ENCODE measurements at regions of chr20 and their contacts with region 1.

Region 1: DNA sequence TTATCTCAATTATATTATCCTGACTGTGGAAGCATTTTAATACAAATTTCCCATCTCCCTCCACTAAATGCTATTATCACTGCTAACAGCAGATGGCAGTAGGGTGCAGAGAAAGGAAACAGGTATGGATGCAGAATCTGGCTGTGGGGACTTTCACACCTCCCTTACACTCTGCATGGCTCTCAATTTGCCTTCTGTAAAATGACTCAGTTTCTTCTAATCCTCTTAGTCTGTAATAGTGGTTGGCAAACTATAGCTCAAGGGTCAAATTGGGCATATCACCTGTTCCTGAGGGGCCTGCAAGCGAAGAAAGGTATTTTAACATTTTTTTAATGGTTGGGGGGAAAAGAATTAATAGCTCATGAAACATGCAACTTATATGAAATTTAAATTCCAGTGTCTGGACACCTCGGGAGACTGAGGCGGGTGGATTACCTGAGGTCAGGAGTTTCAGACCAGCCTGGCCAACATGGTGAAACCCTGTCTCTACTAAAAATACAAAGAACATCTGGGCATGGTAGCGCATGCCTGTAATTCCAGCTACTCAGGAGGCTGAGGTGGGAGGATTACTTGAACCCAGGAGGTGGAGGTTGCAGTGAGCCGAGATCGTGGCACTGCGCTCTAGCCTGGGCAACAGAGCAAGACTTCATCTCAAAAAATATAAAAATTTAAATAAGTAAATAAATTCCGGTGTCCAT is 83.5 kb downstream of the ZMYND8 start:
- DNase-seq: peak in 8 of 9 experiments; percentile 1 to 77 (median 46)
- ATAC-seq: peak; percentile 85
- H3K4me3 ChIP-seq: no peak overlapping the region
- H3K4me3 Mint-ChIP-seq: no peak overlapping the region
- H3K27ac ChIP-seq: no peak overlapping the region
- H3K27ac Mint-ChIP-seq: peak overlapping the region; percentile 66
- H3K4me1 ChIP-seq: no peaks in the 10 kb centered on the region
- H3K4me1 Mint-ChIP-seq: peaks cover 12% of the 10 kb centered on the region
- H3K27me3 ChIP-seq: no peaks in the 10 kb centered on the region
- H3K27me3 Mint-ChIP-seq: no peaks in the 10 kb centered on the region
- CTCF ChIP-seq: peak; percentile 93

Region 2: DNA sequence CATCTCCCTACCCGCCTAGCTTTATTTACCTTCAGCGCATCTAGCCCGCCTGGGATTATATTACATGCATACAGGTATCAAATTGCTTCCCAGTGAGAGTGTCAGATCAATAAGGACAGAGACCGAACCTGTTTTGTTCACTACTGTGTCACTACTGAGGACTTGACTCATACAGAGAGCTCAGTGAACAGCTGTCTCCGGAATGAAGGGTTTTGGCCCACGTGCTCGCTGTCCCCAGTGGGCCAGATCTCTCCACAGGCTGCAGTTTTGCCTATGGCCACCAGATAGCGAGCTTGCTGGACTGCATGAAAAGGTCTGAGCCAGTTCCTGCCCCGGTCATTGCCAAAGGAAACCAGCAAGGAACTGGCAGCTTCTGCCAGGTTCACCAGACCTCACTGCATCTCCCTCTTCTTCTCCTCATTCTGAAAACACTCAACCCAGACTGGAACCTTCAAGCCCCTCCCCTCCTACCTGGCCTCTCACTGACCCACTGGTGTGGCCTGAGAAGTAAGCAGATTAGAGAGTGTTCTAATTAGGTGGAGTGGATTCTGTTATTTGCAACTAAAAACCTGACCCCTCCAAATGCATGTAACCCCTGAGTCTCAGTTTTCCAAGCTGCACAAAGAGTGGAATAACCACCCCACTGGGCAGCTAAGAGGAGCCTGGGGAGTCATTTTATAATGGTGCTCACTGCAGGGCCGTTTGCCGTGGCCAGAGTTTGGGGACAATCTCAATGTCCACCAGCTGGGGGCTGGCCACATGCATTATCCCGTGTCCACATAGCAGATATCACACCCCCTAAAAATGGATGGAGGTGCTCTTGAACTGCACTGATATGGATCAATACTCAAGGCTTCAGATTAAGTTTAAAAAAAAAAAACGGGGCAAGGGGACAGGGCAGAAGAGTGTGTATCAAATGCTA is 67.2 kb before region 1 on chr20:
- CTCF ChIA-PET with region 1: interaction called, 17 read pairs
- POLR2A ChIA-PET with region 1: no interaction called
- intact Hi-C with region 1: no loop called
- DNase-seq: peak in 3 of 9 experiments; percentile 49 to 69 (median 55)
- ATAC-seq: peak; percentile 76
- H3K4me3 ChIP-seq: no peak overlapping the region
- H3K4me3 Mint-ChIP-seq: no peak overlapping the region
- H3K27ac ChIP-seq: no peak overlapping the region
- H3K27ac Mint-ChIP-seq: peak overlapping the region; percentile 34
- H3K4me1 ChIP-seq: no peaks in the 10 kb centered on the region
- H3K4me1 Mint-ChIP-seq: peaks cover 4% of the 10 kb centered on the region
- H3K27me3 ChIP-seq: no peaks in the 10 kb centered on the region
- H3K27me3 Mint-ChIP-seq: no peaks in the 10 kb centered on the region
- CTCF ChIP-seq: peak; percentile 63

Region 3: GRCh38 chr20:47258745-47259695 is 14.0 kb before region 1 on chr20:
- CTCF ChIA-PET with region 1: interaction called, 19 read pairs
- POLR2A ChIA-PET with region 1: no interaction called
- intact Hi-C with region 1: no loop called
- DNase-seq: no peak
- ATAC-seq: no peak
- H3K4me3 ChIP-seq: no peak overlapping the region
- H3K4me3 Mint-ChIP-seq: no peak overlapping the region
- H3K27ac ChIP-seq: no peak overlapping the region
- H3K27ac Mint-ChIP-seq: peak overlapping the region; percentile 80
- H3K4me1 ChIP-seq: no peaks in the 10 kb centered on the region
- H3K4me1 Mint-ChIP-seq: peaks cover 19% of the 10 kb centered on the region
- H3K27me3 ChIP-seq: no peaks in the 10 kb centered on the region
- H3K27me3 Mint-ChIP-seq: no peaks in the 10 kb centered on the region
- CTCF ChIP-seq: no peak

Region 4: DNA sequence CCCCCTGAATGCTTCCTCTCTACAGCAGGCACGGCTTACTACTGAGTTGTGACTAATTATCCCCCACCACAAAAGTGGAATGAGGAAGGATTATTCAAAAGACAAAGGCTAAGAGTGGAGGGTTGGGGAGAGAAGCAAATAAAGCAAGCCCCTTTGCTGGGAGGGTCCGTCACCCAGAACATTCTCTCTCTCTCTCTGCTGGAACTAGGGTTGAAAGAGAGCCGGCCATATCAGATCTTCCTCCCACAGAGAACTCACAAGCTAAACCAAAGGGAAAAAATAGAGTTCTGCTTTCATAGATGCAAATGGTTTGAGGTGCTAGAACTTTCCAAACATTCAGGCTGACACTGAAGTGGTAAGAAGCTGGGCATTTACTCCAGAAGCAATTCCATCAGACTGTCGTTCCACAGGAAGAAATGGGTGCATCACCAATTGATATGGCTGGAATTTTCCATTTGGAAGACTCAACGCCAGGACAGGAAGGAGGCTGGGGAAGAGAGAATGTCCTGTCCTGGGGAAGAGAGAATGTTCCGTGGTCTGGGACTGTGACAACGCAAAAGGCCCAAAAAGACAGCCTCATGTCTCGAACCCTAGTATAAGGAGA is 75.6 kb after region 1 on chr20:
- CTCF ChIA-PET with region 1: interaction called, 36 read pairs
- POLR2A ChIA-PET with region 1: interaction called, 3 read pairs
- intact Hi-C with region 1: loop called in 1 of 2 experiments (anchors 10 kb)
- DNase-seq: no peak
- ATAC-seq: no peak
- H3K4me3 ChIP-seq: no peak overlapping the region
- H3K4me3 Mint-ChIP-seq: no peak overlapping the region
- H3K27ac ChIP-seq: no peak overlapping the region
- H3K27ac Mint-ChIP-seq: no peak overlapping the region
- H3K4me1 ChIP-seq: peaks cover 79% of the 10 kb centered on the region
- H3K4me1 Mint-ChIP-seq: peaks cover 33% of the 10 kb centered on the region
- H3K27me3 ChIP-seq: no peaks in the 10 kb centered on the region
- H3K27me3 Mint-ChIP-seq: no peaks in the 10 kb centered on the region
- CTCF ChIP-seq: no peak

Region 5: GRCh38 chr20:47370850-47371676 is 98.0 kb after region 1 on chr20:
- CTCF ChIA-PET with region 1: interaction called, 22 read pairs
- POLR2A ChIA-PET with region 1: no interaction called
- intact Hi-C with region 1: no loop called
- DNase-seq: no peak
- ATAC-seq: no peak
- H3K4me3 ChIP-seq: no peak overlapping the region
- H3K4me3 Mint-ChIP-seq: no peak overlapping the region
- H3K27ac ChIP-seq: no peak overlapping the region
- H3K27ac Mint-ChIP-seq: no peak overlapping the region
- H3K4me1 ChIP-seq: no peaks in the 10 kb centered on the region
- H3K4me1 Mint-ChIP-seq: peaks cover 5% of the 10 kb centered on the region
- H3K27me3 ChIP-seq: no peaks in the 10 kb centered on the region
- H3K27me3 Mint-ChIP-seq: no peaks in the 10 kb centered on the region
- CTCF ChIP-seq: no peak

Region 6: GRCh38 chr20:47620808-47621805 is 348.1 kb after region 1 on chr20:
- CTCF ChIA-PET with region 1: interaction called, 42 read pairs
- POLR2A ChIA-PET with region 1: interaction called, 3 read pairs
- intact Hi-C with region 1: loop called (anchors 1 kb)
- DNase-seq: peak in 2 of 9 experiments; percentile 61 to 70
- ATAC-seq: no peak
- H3K4me3 ChIP-seq: no peak overlapping the region
- H3K4me3 Mint-ChIP-seq: no peak overlapping the region
- H3K27ac ChIP-seq: no peak overlapping the region
- H3K27ac Mint-ChIP-seq: no peak overlapping the region
- H3K4me1 ChIP-seq: no peaks in the 10 kb centered on the region
- H3K4me1 Mint-ChIP-seq: peaks cover 21% of the 10 kb centered on the region
- H3K27me3 ChIP-seq: no peaks in the 10 kb centered on the region
- H3K27me3 Mint-ChIP-seq: no peaks in the 10 kb centered on the region
- CTCF ChIP-seq: peak; percentile 97